WTC11 (cell line): ENCODE measurements at regions of chr19 and their contacts with region 1.

Region 1: DNA sequence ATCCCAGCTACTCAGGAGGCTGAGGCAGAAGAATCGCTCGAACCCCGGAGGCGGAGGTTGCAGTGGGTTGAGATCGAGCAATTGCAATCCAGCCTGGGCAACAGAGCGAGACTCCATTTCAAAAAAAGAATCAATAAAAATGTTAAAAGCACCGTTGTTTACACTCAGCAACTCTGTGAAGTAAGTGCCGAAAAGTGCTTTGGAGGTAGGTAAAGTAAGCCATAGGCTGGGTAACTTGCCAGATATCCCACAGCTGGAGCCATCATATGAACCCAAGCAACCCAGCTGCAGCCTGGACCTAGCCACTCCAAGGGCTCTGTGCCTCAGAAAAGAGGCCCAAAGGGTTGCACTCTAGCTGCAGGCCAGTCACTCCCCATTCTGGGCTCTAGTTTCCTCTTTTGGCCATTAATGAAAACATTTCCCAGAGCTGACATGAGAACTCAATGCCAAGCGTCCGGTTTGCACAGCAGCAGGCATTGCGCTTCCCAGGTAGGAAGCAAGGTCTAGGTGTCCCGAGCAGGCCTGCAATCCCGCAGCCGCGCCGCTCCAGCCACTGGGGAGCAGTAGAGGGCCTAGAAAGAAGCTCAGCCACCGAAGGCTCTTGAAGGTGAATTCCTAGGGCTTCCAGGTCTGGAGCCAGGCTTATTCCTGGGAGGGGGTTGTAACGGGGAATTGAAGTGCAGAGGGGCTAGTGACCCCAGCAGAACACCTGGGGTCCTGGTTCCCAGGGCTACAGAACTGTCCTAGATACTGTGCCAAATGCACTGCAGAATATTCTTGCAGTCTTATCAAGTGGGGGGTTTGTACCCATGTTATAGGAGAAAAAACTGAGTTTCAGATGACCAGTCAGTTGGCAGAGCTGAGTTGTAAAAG is 4.1 kb upstream of the CD79A start:
- DNase-seq: peak; percentile 94
- ATAC-seq: peak; percentile 70
- H3K4me3 Mint-ChIP-seq: no peak overlapping the region
- H3K27ac Mint-ChIP-seq: peak overlapping the region; percentile 91
- H3K4me1 Mint-ChIP-seq: peaks cover 7% of the 10 kb centered on the region
- H3K27me3 Mint-ChIP-seq: peaks cover 10% of the 10 kb centered on the region
- CTCF ChIP-seq: peak; percentile 48; the same call in 1 of the 2 replicates

Region 2: GRCh38 chr19:41849067-41849466 is 23.9 kb before region 1 on chr19:
- CTCF ChIA-PET with region 1: no interaction called
- POLR2A ChIA-PET with region 1: no interaction called
- DNase-seq: no peak
- ATAC-seq: no peak
- H3K4me3 Mint-ChIP-seq: no peak overlapping the region
- H3K27ac Mint-ChIP-seq: no peak overlapping the region
- H3K4me1 Mint-ChIP-seq: peaks cover 10% of the 10 kb centered on the region
- H3K27me3 Mint-ChIP-seq: peaks cover 47% of the 10 kb centered on the region
- CTCF ChIP-seq: no peak

Region 3: DNA sequence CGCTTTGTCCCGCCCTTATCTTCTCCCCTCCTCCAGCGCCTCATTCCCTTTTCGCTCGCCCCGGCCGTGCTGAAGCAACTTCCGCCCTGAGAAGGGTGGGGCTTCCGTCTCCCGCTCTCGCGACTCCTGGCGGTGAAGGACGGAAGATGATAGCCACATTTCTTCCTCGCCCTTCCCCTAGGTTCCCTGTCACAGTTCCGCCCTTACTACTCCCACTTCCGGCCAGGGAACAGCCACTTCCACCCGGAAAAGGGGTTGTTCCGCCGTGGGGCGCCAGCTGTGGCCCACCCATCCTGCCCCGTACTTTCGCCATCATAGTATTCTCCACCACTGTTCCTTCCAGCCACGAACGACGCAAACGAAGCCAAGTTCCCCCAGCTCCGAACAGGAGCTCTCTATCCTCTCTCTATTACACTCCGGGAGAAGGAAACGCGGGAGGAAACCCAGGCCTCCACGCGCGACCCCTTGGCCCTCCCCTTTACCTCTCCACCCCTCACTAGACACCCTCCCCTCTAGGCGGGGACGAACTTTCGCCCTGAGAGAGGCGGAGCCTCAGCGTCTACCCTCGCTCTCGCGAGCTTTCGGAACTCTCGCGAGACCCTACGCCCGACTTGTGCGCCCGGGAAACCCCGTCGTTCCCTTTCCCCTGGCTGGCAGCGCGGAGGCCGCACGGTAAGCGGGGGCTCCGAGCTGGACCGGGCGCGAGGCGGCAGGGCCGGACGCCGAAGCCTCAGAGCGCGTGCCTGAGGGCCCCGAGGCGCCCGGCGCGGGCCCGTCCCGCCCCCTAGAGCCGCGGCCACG is 13.2 kb before region 1 on chr19 and contains the start of gene RPS19:
- CTCF ChIA-PET with region 1: interaction called, 8 read pairs
- POLR2A ChIA-PET with region 1: interaction called, 30 read pairs
- DNase-seq: peak; percentile 98
- ATAC-seq: peak; percentile 89
- H3K4me3 Mint-ChIP-seq: peak within 1 kb of the TSS; percentile 94
- H3K27ac Mint-ChIP-seq: peak within 1 kb of the TSS; percentile 99
- H3K4me1 Mint-ChIP-seq: peaks cover 43% of the 10 kb centered on the region
- H3K27me3 Mint-ChIP-seq: peaks cover 13% of the 10 kb centered on the region
- CTCF ChIP-seq: 0 out of 2 replicates have a peak, but pooled peaks have one; percentile 23
- total RNA-seq, gene RPS19: 3,152 to 3,787 TPM (median 3,713 TPM) in 3 replicates

Region 4: DNA sequence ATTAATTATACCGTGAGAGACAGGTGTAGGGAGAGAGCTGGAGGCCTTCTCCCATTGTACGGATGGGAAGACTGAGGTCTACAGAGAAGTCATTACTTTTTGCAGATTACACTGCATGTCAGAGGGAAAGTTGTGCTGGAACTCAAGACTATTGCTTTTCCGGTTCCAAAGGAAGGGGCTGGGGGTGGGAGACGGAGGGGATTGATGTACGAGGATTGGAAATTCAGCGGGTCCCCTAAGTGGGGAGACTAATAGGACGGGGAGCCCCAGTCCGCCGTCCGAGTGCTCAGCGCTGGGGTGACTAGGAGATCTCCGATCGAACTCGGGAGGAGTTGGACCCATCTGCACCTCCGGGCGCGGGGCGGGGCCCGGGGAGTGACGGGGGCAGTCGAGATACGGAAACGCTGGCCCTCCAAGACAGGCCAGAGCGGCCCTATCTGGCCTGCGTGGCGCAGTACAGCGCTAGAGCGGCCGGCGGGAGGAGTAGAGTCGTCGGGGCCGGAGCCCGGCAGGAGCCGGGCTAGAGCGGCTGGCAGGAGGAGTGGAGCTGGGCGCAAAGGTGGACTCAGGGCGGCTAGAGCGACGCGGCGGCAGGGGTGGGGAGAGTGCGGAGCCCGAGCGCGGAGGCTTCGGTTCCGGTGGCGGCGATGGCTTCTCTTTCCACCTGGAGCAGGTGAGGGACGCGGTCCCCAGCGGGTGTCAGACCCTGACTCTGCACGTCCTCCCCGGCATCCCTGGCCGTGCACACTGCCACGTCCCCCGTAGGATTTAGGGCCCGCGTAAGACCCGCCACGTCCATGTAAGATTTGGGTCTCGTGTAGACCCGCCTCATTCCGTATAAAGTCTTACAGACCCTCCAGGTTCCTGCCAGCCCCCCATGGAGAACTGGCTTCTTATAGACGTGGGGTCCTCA is 11.1 kb after region 1 on chr19:
- CTCF ChIA-PET with region 1: interaction called, 46 read pairs
- POLR2A ChIA-PET with region 1: interaction called, 10 read pairs
- DNase-seq: peak; percentile 96
- ATAC-seq: peak; percentile 94
- H3K4me3 Mint-ChIP-seq: peak overlapping the region; percentile 94
- H3K27ac Mint-ChIP-seq: peak overlapping the region; percentile 79
- H3K4me1 Mint-ChIP-seq: peaks cover 43% of the 10 kb centered on the region
- H3K27me3 Mint-ChIP-seq: peaks cover 26% of the 10 kb centered on the region
- CTCF ChIP-seq: no peak

Region 5: GRCh38 chr19:41928221-41928683 is 55.2 kb after region 1 on chr19 and contains the start of gene ERFL:
- CTCF ChIA-PET with region 1: interaction called, 34 read pairs
- POLR2A ChIA-PET with region 1: interaction called, 6 read pairs
- DNase-seq: no peak
- ATAC-seq: peak; percentile 13
- H3K4me3 Mint-ChIP-seq: peak within 1 kb of the TSS; percentile 72
- H3K27ac Mint-ChIP-seq: no peak within 1 kb of the TSS
- H3K4me1 Mint-ChIP-seq: peaks cover 31% of the 10 kb centered on the region
- H3K27me3 Mint-ChIP-seq: peaks cover 47% of the 10 kb centered on the region
- CTCF ChIP-seq: no peak
- total RNA-seq, gene ERFL: 0.30 to 0.66 TPM (median 0.31 TPM) in 3 replicates

Region 6: GRCh38 chr19:41936416-41936850 is 63.4 kb after region 1 on chr19:
- CTCF ChIA-PET with region 1: interaction called, 34 read pairs
- POLR2A ChIA-PET with region 1: interaction called, 4 read pairs
- DNase-seq: no peak
- ATAC-seq: no peak
- H3K4me3 Mint-ChIP-seq: no peak overlapping the region
- H3K27ac Mint-ChIP-seq: no peak overlapping the region
- H3K4me1 Mint-ChIP-seq: peaks cover 18% of the 10 kb centered on the region
- H3K27me3 Mint-ChIP-seq: peaks cover 79% of the 10 kb centered on the region
- CTCF ChIP-seq: no peak

Region 7: GRCh38 chr19:41951686-41952172 is 78.7 kb after region 1 on chr19:
- CTCF ChIA-PET with region 1: interaction called, 26 read pairs
- POLR2A ChIA-PET with region 1: interaction called, 4 read pairs
- DNase-seq: peak; percentile 97
- ATAC-seq: peak; percentile 93
- H3K4me3 Mint-ChIP-seq: peak overlapping the region; percentile 65
- H3K27ac Mint-ChIP-seq: no peak overlapping the region
- H3K4me1 Mint-ChIP-seq: no peaks in the 10 kb centered on the region
- H3K27me3 Mint-ChIP-seq: peaks cover 15% of the 10 kb centered on the region
- CTCF ChIP-seq: peak; percentile 100

Region 8: DNA sequence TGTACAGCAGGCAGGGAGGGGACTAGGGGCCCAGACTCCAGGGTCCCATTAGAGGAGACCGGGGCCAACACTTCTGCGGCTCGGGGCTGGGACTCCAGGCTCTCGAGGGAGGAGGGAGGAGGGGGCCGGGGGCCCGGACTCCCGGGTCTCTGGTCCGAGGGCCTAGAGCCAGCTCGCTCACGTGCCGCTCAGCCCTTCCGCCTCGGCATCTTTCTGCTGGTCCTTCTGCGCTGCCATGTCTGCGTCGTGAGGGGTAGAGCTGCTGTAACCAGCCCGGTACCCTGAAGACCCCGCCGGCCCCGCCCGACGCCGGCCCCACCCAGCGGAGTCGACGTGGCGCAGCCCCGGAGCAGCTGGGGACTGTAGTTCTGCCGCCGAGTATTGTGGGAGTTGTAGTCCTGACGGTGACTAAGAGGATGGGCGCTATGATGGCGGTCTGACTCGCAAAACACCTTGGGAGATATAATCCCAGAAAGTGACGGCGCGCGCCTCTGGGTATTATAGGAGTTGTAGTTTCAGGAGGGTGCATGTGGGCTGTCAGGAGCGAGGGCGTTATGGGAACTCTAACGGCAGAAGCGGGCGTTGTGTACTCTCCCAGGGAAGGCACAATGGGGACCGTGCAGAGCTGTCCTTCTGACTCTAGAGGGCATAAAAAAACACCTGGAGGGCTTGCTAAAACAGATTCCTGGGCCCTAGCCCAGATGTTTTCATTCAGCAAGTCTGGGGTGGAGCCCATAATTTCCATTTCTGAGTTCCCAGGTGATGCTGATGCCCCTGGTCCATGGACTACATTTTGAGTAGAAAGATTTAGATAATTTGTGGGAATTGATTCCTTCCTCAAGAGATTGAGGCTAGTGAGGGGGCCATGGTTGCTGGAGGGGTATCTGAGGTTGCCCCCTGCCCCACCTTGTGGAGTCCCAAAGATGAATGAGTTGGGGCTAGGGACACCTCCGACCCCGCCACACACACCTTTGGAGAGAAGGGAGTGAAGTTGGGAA is 86.3 kb after region 1 on chr19 and contains the start of gene RABAC1:
- CTCF ChIA-PET with region 1: interaction called, 26 read pairs
- POLR2A ChIA-PET with region 1: interaction called, 8 read pairs
- DNase-seq: peak; percentile 97
- ATAC-seq: peak; percentile 85
- H3K4me3 Mint-ChIP-seq: peak within 1 kb of the TSS; percentile 78
- H3K27ac Mint-ChIP-seq: peak within 1 kb of the TSS; percentile 98
- H3K4me1 Mint-ChIP-seq: peaks cover 18% of the 10 kb centered on the region
- H3K27me3 Mint-ChIP-seq: no peaks in the 10 kb centered on the region
- CTCF ChIP-seq: no peak
- total RNA-seq, gene RABAC1: 159 to 184 TPM (median 159 TPM) in 3 replicates